ENCODE measurements at regions of chr3 and their contacts with region 1.

Region 1: GRCh38 chr3:114383875-114384557 is 90.2 kb downstream of the TIGIT start:
- DNase-seq: peak; percentile 81
- ATAC-seq: peak; percentile 87
- H3K4me3 ChIP-seq: no peak overlapping the region
- H3K27ac ChIP-seq: peak overlapping the region; percentile 22; the same call in 1 of the 2 replicates
- H3K4me1 ChIP-seq: peaks cover 9% of the 10 kb centered on the region
- H3K27me3 ChIP-seq: no peaks in the 10 kb centered on the region
- CTCF ChIP-seq: peak; percentile 94
- POLR2A ChIP-seq: 0 out of 2 replicates have a peak, but pooled peaks have one; percentile 25
- RAD21 ChIP-seq: peak; percentile 96

Region 2: DNA sequence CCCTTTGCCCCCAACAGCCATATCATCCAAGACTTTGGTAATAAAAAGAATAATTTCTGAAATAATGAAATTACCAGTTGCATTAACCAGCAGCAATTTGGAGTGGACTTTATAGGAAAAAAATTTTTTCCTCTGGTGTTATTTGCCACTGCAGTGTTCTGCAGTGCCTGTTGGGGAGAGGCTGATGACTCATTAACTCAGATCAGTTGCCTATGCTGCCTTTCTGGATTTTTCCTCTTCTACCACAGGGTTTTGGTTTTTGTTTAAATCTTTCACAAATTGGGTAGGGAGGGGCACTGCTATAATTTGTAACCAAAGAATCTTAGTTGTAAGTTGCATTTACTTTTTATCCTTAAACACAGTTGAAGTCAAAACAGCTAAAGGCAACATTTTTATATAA is 614.5 kb before region 1 on chr3:
- CTCF ChIA-PET with region 1: no interaction called
- POLR2A ChIA-PET with region 1: no interaction called
- dilution Hi-C with region 1: no loop called
- in situ Hi-C with region 1: no loop called
- intact Hi-C with region 1: no loop called
- DNase-seq: peak; percentile 70
- ATAC-seq: peak; percentile 79
- H3K4me3 ChIP-seq: no peak overlapping the region
- H3K27ac ChIP-seq: peak overlapping the region; percentile 6; the same call in 1 of the 2 replicates
- H3K4me1 ChIP-seq: peaks cover 15% of the 10 kb centered on the region
- H3K27me3 ChIP-seq: no peaks in the 10 kb centered on the region
- CTCF ChIP-seq: peak; percentile 16; the same call in 1 of the 2 replicates
- POLR2A ChIP-seq: no peak
- RAD21 ChIP-seq: no peak

Region 3: GRCh38 chr3:114242947-114243346 is 141.1 kb before region 1 on chr3:
- CTCF ChIA-PET with region 1: no interaction called
- POLR2A ChIA-PET with region 1: no interaction called
- dilution Hi-C with region 1: no loop called
- in situ Hi-C with region 1: no loop called
- intact Hi-C with region 1: no loop called
- DNase-seq: no peak
- ATAC-seq: no peak
- H3K4me3 ChIP-seq: no peak overlapping the region
- H3K27ac ChIP-seq: no peak overlapping the region
- H3K4me1 ChIP-seq: no peaks in the 10 kb centered on the region
- H3K27me3 ChIP-seq: peaks cover 6% of the 10 kb centered on the region
- CTCF ChIP-seq: no peak
- POLR2A ChIP-seq: no peak
- RAD21 ChIP-seq: no peak

Region 4: DNA sequence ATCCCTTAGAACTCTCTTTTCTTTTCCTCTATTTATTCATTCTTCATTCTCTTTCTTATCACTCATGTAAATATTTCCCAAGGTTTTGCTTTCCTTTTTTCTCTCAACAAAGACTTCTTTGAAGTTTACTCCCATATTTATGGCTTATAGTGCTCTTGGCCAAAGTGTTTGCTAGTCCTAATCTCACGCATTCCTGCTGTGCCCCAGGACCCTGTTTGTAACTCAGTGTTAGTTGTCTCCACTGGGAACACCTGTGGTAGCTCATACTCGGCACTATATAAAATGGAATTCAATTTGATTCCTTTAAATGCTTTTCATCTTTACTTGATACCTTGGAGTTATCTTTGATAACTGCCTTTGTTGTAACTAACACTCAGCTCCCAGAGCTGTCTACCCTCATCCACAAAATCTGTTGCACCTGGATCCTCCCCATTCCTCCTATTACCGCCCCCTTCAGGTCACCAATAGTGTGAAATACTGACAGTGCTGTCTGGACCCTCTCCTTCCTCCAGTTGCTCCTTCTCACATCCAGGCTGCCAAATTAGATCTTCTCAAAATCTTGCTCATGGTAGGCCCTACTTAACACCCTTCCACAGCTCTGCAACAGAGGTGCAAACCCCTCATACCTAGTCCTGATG is 13.4 kb before region 1 on chr3:
- CTCF ChIA-PET with region 1: interaction called, 6 read pairs
- POLR2A ChIA-PET with region 1: interaction called, 11 read pairs
- dilution Hi-C with region 1: no loop called
- in situ Hi-C with region 1: no loop called
- intact Hi-C with region 1: no loop called
- DNase-seq: no peak
- ATAC-seq: no peak
- H3K4me3 ChIP-seq: no peak overlapping the region
- H3K27ac ChIP-seq: no peak overlapping the region
- H3K4me1 ChIP-seq: no peaks in the 10 kb centered on the region; the same call in 1 of the 2 replicates
- H3K27me3 ChIP-seq: no peaks in the 10 kb centered on the region
- CTCF ChIP-seq: no peak
- POLR2A ChIP-seq: no peak
- RAD21 ChIP-seq: no peak

Region 5: DNA sequence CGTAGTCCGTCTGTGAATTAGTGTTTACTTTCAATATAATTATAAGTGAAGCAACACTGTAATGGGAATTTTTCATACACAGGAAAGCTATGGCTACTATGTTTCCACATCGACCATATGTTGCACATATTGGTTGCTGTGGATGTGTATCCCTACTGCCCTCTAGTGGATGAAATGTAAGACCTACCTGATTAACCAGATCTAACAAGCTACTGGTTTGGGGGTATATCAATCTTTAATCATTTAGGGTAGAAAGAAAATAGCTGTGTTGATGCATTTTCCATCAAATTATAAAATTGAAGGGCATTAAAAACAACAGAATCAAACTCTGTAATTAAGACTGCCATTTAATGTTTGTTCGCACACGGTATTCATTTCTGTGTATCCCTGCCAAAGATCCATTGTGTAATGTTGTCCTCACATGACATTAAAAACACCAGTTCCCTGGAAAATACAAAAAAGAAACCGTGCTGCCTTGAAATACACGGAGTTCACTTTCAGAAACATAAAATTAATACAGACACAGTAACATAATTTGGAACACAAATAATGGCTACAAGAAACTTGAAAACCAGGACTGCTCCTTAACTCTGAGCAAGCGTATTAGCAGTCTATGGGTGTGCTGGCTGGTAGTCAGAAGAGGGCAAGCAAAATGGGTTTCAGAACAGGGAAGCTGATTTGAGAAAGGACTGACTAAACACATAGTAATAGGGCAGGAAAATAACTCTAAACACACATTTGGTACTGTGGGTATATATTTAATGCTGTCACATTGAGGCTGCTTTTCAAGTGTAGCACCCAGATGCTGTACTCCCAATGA is 34.9 kb after region 1 on chr3:
- CTCF ChIA-PET with region 1: interaction called, 4 read pairs
- POLR2A ChIA-PET with region 1: no interaction called
- dilution Hi-C with region 1: no loop called
- in situ Hi-C with region 1: no loop called
- intact Hi-C with region 1: loop called (anchors 2 kb)
- DNase-seq: peak; percentile 95
- ATAC-seq: peak; percentile 93
- H3K4me3 ChIP-seq: no peak overlapping the region
- H3K27ac ChIP-seq: peak overlapping the region; percentile 15; the same call in 1 of the 2 replicates
- H3K4me1 ChIP-seq: peaks cover 4% of the 10 kb centered on the region; the same call in 1 of the 2 replicates
- H3K27me3 ChIP-seq: no peaks in the 10 kb centered on the region
- CTCF ChIP-seq: peak; percentile 77
- POLR2A ChIP-seq: no peak
- RAD21 ChIP-seq: peak; percentile 71

Region 6: GRCh38 chr3:114756506-114757279 is 372.7 kb after region 1 on chr3:
- CTCF ChIA-PET with region 1: no interaction called
- POLR2A ChIA-PET with region 1: no interaction called
- dilution Hi-C with region 1: no loop called
- in situ Hi-C with region 1: no loop called
- intact Hi-C with region 1: loop called (anchors 5 kb)
- DNase-seq: peak; percentile 56
- ATAC-seq: 0 out of 2 replicates have a peak, but pooled peaks have one; percentile 42
- H3K4me3 ChIP-seq: no peak overlapping the region
- H3K27ac ChIP-seq: no peak overlapping the region
- H3K4me1 ChIP-seq: no peaks in the 10 kb centered on the region; the same call in 1 of the 2 replicates
- H3K27me3 ChIP-seq: no peaks in the 10 kb centered on the region
- CTCF ChIP-seq: no peak
- POLR2A ChIP-seq: no peak
- RAD21 ChIP-seq: no peak

Region 7: DNA sequence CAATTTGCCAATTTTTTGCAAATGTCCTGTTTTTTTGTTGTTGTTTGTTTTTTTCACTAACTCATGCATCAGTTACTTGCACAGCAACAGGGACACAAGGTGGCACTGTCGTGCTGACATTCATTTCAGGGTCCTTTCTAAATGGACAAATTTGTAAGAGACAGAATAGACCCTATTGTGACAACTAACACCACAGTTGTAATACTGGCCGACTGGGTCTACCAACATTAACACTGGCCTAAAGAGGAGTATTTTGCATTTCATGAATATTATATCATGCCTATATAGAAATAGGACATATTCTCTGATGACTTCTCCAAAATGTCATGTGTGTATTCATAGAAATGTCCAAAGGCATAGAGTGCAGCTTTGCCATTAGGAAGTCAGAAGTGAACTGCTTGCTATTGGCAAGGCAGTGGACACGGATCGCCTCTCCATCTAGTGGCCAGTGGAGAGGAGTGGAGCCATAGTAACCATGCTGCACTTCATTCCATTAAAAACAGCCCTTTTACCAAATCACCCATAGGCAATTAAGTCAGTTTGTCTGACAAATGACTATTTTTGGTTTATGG is 708.3 kb after region 1 on chr3:
- CTCF ChIA-PET with region 1: no interaction called
- POLR2A ChIA-PET with region 1: no interaction called
- dilution Hi-C with region 1: no loop called
- in situ Hi-C with region 1: no loop called
- intact Hi-C with region 1: loop called (anchors 5 kb)
- DNase-seq: peak; percentile 69
- ATAC-seq: peak; percentile 100
- H3K4me3 ChIP-seq: no peak overlapping the region
- H3K27ac ChIP-seq: no peak overlapping the region
- H3K4me1 ChIP-seq: no peaks in the 10 kb centered on the region
- H3K27me3 ChIP-seq: no peaks in the 10 kb centered on the region
- CTCF ChIP-seq: peak; percentile 82
- POLR2A ChIP-seq: no peak
- RAD21 ChIP-seq: peak; percentile 81

Measured in IMR-90 (cell line).